K562 (cell line): ENCODE measurements at regions of chr3 and their contacts with region 1.

Region 1: DNA sequence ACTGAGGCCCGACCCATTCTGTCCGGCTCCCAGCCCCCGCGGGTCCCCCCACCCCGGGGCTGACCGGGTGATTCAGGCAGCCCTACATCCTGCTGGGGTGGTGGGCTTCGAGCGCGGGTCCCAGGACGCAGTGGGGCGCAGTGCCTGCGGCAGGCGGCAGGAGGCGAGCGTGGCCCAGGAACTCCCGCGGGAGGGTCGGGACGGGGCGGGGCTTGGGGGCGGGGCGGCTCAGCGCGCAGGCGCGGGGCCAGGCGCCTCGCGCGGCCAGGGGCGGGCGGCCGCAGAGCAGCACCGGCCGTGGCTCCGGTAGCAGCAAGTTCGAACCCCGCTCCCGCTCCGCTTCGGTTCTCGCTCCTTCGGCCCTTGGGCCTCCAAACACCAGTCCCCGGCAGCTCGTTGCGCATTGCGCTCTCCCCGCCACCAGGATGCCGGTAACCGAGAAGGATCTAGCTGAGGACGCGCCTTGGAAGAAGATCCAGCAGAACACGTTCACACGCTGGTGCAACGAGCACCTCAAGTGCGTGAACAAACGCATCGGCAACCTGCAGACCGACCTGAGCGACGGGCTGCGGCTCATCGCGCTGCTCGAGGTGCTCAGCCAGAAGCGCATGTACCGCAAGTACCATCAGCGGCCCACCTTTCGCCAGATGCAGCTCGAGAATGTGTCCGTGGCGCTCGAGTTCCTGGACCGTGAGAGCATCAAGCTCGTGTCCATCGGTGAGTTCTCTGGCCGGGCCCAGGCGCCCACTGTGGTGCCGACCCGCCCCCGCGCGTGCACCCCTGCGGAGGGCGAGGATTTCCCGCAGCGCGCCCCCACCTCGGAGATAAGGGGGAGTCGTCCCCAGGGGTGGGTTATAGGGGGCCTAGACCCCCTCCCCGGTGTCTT is at the start of gene FLNB:
- DNase-seq: peak; percentile 80 to 95 (median 94)
- ATAC-seq: peak; percentile 89
- H3K4me3 ChIP-seq: peak within 1 kb of the TSS; percentile 83
- H3K27ac ChIP-seq: peak within 1 kb of the TSS; percentile 85; the same call in 2 of the 3 replicates
- H3K4me1 ChIP-seq: peaks cover 5 to 23% of the 10 kb centered on the region in 2 experiments; a peak in 4 of 5 replicates
- H3K27me3 ChIP-seq: no peaks in the 10 kb centered on the region
- CTCF ChIP-seq: peak; percentile 57 to 75 (median 62); a peak in 5 of 6 replicates
- EP300 ChIP-seq: no peak
- POLR2A ChIP-seq: peak; percentile 67
- RAD21 ChIP-seq: peak; percentile 60 to 67
- polyA plus RNA-seq, gene FLNB: 9.4 to 13.0 TPM

Region 2: DNA sequence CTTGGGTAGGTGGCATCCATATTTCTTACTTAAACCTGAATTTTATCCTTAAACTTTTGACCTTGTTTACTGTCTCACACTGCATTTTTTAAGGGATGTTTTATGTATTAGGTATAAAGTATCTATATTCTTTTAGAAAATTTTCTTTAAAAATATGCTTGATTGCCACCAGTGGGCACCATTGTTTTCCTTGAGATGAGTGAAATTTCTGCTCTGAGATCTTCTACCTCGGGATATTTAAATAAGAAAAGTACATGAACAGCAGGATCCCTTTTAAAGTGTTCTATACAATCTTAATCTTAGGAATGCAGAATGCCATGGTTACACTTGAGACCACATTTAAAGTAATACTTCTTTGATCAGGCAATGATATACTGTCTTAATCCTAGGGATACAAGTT is 143.5 kb before region 1 on chr3:
- CTCF ChIA-PET with region 1: no interaction called
- POLR2A ChIA-PET with region 1: no interaction called
- in situ Hi-C with region 1: no loop called
- intact Hi-C with region 1: loop called (anchors 10 kb)
- DNase-seq: peak in 1 of 4 experiments; percentile 6
- ATAC-seq: no peak
- H3K4me3 ChIP-seq: no peak overlapping the region
- H3K27ac ChIP-seq: no peak overlapping the region
- H3K4me1 ChIP-seq: no peaks in the 10 kb centered on the region
- H3K27me3 ChIP-seq: no peaks in the 10 kb centered on the region
- CTCF ChIP-seq: peak in 1 of 3 experiments; percentile 45; a peak in 2 of 6 replicates
- EP300 ChIP-seq: no peak
- POLR2A ChIP-seq: no peak
- RAD21 ChIP-seq: peak; percentile 39 to 46; a peak in 3 of 4 replicates

Region 3: GRCh38 chr3:57877116-57877515 is 131.3 kb before region 1 on chr3:
- CTCF ChIA-PET with region 1: no interaction called
- POLR2A ChIA-PET with region 1: no interaction called
- in situ Hi-C with region 1: no loop called
- intact Hi-C with region 1: no loop called
- DNase-seq: no peak
- ATAC-seq: no peak
- H3K4me3 ChIP-seq: no peak overlapping the region
- H3K27ac ChIP-seq: no peak overlapping the region
- H3K4me1 ChIP-seq: no peaks in the 10 kb centered on the region
- H3K27me3 ChIP-seq: no peaks in the 10 kb centered on the region
- CTCF ChIP-seq: no peak
- EP300 ChIP-seq: no peak
- POLR2A ChIP-seq: no peak
- RAD21 ChIP-seq: no peak

Region 4: DNA sequence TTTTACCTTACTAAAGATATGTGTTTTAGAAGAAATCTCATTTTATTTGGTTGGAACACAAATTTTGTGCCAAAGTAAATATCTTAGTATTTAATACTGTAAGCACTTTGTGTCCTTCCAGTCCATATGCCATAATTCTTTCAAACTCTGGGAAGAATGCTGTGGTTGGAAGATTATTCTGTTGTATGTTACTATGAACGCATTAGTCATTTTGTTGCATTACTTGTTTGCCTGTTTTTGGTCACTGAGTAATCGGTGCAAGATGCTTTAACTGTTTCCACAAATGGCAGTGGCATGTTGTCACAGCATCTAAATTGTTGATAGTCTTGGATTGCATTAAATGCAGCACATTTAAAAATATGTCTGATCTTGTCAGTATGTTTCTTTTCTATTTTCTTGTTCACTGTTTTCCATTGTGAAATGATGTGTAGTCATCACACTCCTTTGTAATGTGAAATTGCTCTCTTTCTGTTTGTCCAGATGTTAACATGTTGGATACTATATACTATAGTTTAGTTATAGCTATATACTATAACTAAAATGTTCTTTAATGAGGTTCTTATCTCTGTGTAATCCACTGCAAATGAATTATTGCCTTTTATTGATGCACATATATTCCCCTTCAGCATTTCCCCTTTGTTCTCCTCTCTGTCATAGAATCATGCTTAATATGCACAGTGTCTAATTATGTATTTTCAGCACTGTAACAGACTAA is 90.1 kb before region 1 on chr3:
- CTCF ChIA-PET with region 1: no interaction called
- POLR2A ChIA-PET with region 1: no interaction called
- in situ Hi-C with region 1: no loop called
- intact Hi-C with region 1: no loop called
- DNase-seq: no peak
- ATAC-seq: no peak
- H3K4me3 ChIP-seq: no peak overlapping the region
- H3K27ac ChIP-seq: no peak overlapping the region
- H3K4me1 ChIP-seq: 0 out of 5 replicates have a peak, but pooled peaks cover 0 to 2% of the 10 kb centered on the region in 2 experiments
- H3K27me3 ChIP-seq: no peaks in the 10 kb centered on the region
- CTCF ChIP-seq: no peak
- EP300 ChIP-seq: no peak
- POLR2A ChIP-seq: no peak
- RAD21 ChIP-seq: no peak

Region 5: GRCh38 chr3:57961828-57962447 is 46.4 kb before region 1 on chr3:
- CTCF ChIA-PET with region 1: no interaction called
- POLR2A ChIA-PET with region 1: interaction called, 3 read pairs
- in situ Hi-C with region 1: no loop called
- intact Hi-C with region 1: loop called (anchors 5 kb)
- DNase-seq: peak; percentile 14 to 55 (median 25)
- ATAC-seq: peak; percentile 65
- H3K4me3 ChIP-seq: no peak overlapping the region
- H3K27ac ChIP-seq: no peak overlapping the region
- H3K4me1 ChIP-seq: peaks cover 16 to 22% of the 10 kb centered on the region in 2 experiments
- H3K27me3 ChIP-seq: no peaks in the 10 kb centered on the region
- CTCF ChIP-seq: peak; percentile 28 to 63 (median 59); a peak in 5 of 6 replicates
- EP300 ChIP-seq: no peak
- POLR2A ChIP-seq: no peak
- RAD21 ChIP-seq: peak; percentile 62 to 76

Region 6: DNA sequence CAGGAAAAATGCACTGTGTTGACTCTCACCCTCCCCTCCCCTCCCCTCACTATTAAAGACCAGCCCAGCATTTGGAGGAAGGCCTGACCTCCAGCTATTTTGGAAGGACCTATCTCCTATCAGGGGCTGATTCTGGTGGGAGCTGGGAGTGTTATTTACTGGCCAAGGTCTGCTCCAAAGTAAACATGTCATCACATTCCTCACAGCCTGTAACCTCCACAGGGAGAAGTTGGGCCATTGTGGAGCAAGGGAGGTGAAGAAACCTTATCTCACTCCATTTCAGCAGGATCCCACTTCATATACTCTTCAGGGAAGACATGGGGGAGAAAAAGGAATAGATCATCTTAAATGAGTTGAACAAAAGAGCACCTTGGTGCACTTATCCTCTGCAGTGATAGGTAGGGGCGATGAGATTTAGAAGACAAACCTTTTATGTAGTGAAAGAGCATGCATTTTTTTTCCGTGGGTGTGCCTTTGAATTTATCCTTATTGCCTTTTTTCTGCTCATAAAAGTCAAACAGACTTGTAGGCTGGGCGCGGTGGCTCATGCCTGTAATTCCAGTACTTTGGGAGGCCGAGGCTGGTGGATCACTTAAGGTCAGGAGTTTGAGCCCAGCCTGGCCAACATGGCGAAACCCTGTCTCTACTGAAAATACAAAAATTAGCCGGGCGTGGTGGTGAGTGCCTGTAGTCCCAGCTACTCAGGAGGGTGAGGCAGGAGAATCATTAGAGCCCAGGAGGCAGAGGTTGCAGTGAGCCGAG is 15.8 kb before region 1 on chr3:
- CTCF ChIA-PET with region 1: no interaction called
- POLR2A ChIA-PET with region 1: no interaction called
- in situ Hi-C with region 1: no loop called
- intact Hi-C with region 1: no loop called
- DNase-seq: no peak
- ATAC-seq: no peak
- H3K4me3 ChIP-seq: no peak overlapping the region
- H3K27ac ChIP-seq: no peak overlapping the region
- H3K4me1 ChIP-seq: peaks cover 0 to under 1% of the 10 kb centered on the region in 2 experiments; a peak in 2 of 5 replicates
- H3K27me3 ChIP-seq: no peaks in the 10 kb centered on the region
- CTCF ChIP-seq: no peak
- EP300 ChIP-seq: no peak
- POLR2A ChIP-seq: no peak
- RAD21 ChIP-seq: no peak

Region 7: GRCh38 chr3:58021072-58021959 is 12.9 kb after region 1 on chr3:
- CTCF ChIA-PET with region 1: no interaction called
- POLR2A ChIA-PET with region 1: interaction called, 11 read pairs
- in situ Hi-C with region 1: no loop called
- intact Hi-C with region 1: no loop called
- DNase-seq: no peak
- ATAC-seq: no peak
- H3K4me3 ChIP-seq: no peak overlapping the region
- H3K27ac ChIP-seq: no peak overlapping the region
- H3K4me1 ChIP-seq: peaks cover 0 to 7% of the 10 kb centered on the region in 2 experiments; a peak in 2 of 5 replicates
- H3K27me3 ChIP-seq: no peaks in the 10 kb centered on the region
- CTCF ChIP-seq: no peak
- EP300 ChIP-seq: no peak
- POLR2A ChIP-seq: no peak
- RAD21 ChIP-seq: no peak

Region 8: DNA sequence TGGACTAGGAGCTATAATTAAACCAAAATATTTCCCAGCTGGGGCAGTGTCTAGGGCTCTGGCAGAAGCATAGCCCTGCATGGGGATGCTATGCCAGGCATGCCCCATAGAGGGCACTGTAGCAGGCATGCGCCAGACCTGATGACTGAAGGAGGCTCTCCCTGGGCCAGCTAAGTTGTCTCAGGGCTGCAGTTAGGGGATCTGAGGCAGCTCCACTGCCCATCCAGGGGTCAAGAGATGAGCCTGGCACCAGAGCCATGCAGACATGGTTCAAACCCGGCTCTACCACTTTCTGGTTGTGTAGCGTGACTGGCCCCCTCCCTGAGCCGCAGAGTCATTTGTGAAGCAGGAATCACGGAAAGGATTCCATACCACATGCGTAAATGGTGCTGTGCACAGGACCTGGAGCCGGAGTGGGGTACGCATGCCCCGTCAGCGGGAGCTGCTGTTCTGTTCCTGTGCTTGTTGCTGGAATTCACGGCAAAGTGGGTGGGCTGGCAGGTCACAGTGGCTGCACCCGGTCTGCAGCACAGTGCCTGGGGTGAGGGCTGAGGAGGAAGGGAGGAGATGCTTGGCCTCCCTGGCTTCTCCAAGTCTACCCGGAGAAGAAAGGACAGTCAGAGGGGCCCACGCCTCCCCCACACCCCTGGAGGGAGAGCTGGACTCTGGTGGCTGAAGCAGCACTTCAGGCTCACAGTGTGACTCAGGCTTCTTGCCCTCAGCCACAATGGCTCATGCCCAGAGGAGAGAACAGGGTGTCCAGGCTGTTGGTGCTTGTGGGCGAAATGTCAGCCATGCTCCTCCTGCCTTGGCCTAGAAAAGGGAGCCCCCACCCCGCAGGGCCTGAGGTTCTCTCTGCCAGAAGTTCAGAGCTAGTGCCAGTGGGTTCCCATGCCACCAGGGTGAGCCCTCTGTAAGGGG is 159.3 kb after region 1 on chr3:
- CTCF ChIA-PET with region 1: no interaction called
- POLR2A ChIA-PET with region 1: interaction called, 3 read pairs
- in situ Hi-C with region 1: loop called (anchors 25 kb)
- intact Hi-C with region 1: no loop called
- DNase-seq: peak; percentile 69 to 75 (median 72)
- ATAC-seq: peak; percentile 94
- H3K4me3 ChIP-seq: no peak overlapping the region
- H3K27ac ChIP-seq: no peak overlapping the region
- H3K4me1 ChIP-seq: peaks cover 20 to 23% of the 10 kb centered on the region in 2 experiments; a peak in 4 of 5 replicates
- H3K27me3 ChIP-seq: no peaks in the 10 kb centered on the region
- CTCF ChIP-seq: peak; percentile 73 to 84 (median 78)
- EP300 ChIP-seq: no peak
- POLR2A ChIP-seq: no peak
- RAD21 ChIP-seq: peak in 1 of 2 experiments; percentile 32; a peak in 2 of 4 replicates

Region 9: DNA sequence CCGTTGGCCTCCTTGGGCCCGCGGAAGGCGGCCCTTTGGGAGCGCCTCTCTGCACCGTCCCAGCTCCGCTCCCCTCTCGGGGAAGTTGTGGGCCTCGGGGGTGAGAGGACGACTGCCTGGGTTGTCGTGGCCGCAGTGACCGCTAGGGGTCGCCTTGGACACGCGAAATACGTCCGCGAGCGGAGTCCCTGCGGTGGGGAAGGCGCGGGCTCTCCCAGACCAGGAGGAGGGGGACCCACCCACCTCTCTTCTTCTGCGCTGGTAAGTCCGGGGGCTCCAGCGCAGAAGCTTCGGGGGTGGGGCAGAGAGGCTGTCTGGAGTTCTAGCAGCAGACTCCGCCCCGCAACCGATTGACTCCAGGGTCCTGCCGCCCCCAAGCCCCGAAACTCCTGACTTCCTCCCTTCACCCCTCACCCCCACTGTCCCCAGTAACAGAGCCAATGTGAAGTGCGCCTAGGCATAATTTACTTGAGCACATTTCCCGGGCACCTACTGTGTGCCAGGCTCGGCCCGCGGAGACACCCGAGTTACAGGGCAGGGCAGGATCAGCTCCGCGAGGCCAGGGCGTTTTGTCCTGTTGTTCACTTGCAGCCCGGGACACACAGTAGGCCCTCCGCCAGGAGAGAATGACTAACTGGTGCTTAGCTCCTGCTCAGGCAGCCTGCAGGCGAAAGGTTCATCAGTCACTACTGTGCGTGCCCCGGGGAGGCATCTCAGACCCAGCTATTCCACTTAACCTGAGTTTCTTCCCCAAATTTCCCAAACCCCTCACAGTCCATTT is 169.6 kb after region 1 on chr3:
- CTCF ChIA-PET with region 1: interaction called, 3 read pairs
- POLR2A ChIA-PET with region 1: no interaction called
- in situ Hi-C with region 1: loop called (anchors 25 kb)
- intact Hi-C with region 1: loop called (anchors 1 kb)
- DNase-seq: peak; percentile 76 to 88 (median 78)
- ATAC-seq: peak; percentile 88
- H3K4me3 ChIP-seq: peak overlapping the region; percentile 21; the same call in 1 of the 2 replicates
- H3K27ac ChIP-seq: no peak overlapping the region
- H3K4me1 ChIP-seq: peaks cover 34 to 35% of the 10 kb centered on the region in 2 experiments
- H3K27me3 ChIP-seq: no peaks in the 10 kb centered on the region
- CTCF ChIP-seq: peak; percentile 78
- EP300 ChIP-seq: no peak
- POLR2A ChIP-seq: no peak
- RAD21 ChIP-seq: peak; percentile 44 to 71

Region 10: DNA sequence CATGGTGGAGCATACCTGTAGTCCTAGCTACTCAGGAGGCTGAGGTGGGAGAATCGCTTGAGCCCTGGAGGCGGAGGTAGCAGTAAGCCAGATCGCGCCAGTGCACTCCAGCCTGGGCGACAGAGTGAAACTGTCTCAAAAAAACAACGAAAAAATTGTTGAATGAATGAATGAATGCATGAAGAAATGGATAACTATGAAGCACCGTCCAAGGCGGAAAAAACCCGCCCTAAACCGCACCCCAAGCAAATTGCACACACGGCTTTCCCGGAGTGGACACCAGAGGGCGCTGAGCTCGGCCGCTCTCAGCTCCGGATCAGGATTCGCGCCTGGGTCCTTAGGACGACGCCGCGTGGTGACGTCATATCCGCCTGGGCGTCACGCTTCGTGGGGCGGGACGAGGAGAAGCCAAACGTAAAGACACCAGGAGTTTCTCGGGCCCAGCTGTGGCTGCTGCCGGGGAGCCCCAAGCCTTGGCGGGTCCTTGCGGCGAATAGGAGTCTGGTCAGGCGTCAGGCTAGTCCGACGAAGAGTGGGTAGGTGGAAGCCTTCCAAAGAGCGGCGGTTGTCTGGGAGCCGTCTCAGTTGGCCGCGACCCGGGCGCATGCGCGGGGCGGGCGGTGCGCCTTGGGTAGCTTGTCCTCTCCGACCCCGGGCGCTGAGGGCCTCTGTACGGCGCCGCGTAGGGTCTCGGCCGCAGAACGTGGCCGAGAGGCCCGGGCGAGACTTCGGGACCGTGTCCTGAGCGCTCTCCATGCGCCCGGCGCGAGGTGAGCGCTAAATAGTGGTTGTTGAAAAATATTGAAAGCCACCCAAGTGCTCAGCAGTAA is 297.7 kb after region 1 on chr3 and contains the starts of genes HTD2 and RPP14:
- CTCF ChIA-PET with region 1: no interaction called
- POLR2A ChIA-PET with region 1: interaction called, 3 read pairs
- in situ Hi-C with region 1: loop called (anchors 10 kb)
- intact Hi-C with region 1: no loop called
- DNase-seq: peak; percentile 88 to 96 (median 90)
- ATAC-seq: peak; percentile 95
- H3K4me3 ChIP-seq: peak within 1 kb of the TSS; percentile 80
- H3K27ac ChIP-seq: peak within 1 kb of the TSS; percentile 96
- H3K4me1 ChIP-seq: peaks cover 0 to 7% of the 10 kb centered on the region in 2 experiments; a peak in 3 of 5 replicates
- H3K27me3 ChIP-seq: no peaks in the 10 kb centered on the region
- CTCF ChIP-seq: peak; percentile 87 to 92 (median 91)
- EP300 ChIP-seq: peak; percentile 28; the same call in 1 of the 2 replicates
- POLR2A ChIP-seq: peak; percentile 86
- RAD21 ChIP-seq: peak; percentile 27 to 55; a peak in 3 of 4 replicates
- polyA plus RNA-seq, gene HTD2: 13.9 to 22.8 TPM
- polyA plus RNA-seq, gene RPP14: 20.5 to 20.8 TPM